ENCODE measurements at regions of chr2 and their contacts with region 1.

Region 1: DNA sequence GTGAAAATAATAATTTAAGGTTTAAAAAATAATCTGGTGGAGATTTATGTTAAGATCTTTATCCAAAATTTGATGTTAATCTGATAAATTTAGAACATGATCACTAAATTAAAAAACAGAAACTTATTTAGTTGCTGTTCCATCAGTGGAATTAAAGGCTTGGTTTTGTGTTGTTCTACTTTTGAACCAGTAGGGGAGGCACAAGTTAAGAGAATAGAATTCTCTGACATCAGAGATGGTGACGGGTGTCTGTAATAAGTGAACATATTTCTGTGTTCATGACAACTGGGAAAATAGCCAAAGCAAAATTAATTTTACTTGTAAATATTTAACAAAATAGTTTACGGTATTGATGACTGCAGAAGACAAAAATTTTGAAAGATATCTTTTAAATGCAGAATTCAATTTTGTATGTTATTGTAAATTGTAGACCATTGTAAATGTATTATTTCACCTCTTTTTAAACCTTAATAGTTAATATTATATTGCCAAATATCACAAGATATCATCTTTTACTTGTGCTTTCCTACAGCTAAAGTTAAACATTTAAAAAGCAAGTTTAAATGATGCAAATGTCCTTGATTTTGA is 106.0 kb downstream of the UBR3 start:
- DNase-seq: no peak
- ATAC-seq: peak in 1 of 2 donors; percentile 63

Region 2: DNA sequence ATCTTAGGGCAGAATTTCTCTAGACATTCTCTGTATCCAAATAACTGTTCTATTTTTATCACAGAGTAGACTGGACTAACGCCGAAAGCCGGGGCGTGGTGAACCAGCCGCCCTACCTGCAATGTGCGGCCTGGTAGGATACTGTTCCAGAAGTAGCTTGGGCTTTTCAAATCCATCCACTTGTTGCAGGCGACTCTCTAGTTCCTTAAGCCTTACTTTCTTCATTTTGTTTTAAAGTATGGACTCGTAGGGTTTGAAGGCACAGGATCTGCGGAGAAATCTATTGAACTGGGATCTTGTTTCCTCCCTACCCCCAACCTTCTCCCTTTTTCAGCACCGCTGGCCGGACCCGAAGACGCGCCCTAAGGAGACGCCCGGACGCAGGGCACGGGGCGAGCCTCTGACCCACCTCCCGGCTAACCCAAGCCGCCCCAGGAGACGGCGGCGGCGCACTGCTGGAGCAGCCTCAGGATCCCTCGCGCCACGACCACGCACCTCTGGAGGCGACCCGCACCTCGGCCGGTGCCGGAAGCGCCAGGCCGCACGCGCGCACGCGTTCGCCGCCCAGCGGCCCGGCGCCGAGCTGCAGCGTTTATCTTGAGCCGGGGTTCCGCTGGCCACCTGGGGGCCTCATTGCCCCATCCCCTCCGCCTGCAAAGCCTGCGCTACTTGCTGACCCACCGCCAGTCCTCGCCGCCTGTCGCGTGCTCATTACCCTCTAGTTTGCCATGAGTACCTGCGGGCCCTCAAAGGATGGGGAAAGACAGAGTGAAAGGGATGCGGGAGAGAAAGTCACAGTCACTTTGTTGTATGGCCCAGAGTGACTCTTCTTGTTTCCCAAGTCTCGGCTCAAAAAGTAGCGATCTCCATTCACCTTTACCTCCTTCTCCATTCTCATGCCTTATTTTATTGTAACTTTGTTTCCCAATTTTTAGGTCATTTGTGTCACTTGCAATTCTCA is 108.6 kb before region 1 on chr2 and contains the start of gene METTL5:
- intact Hi-C with region 1: loop called (anchors 2 to 5 kb)
- DNase-seq: peak; percentile 87
- ATAC-seq: peak; percentile 69 to 75
- total RNA-seq, gene METTL5: 51.5 to 55.2 TPM

Region 3: GRCh38 chr2:169895294-169895985 is 37.8 kb before region 1 on chr2:
- intact Hi-C with region 1: no loop called
- DNase-seq: no peak
- ATAC-seq: no peak

Region 4: DNA sequence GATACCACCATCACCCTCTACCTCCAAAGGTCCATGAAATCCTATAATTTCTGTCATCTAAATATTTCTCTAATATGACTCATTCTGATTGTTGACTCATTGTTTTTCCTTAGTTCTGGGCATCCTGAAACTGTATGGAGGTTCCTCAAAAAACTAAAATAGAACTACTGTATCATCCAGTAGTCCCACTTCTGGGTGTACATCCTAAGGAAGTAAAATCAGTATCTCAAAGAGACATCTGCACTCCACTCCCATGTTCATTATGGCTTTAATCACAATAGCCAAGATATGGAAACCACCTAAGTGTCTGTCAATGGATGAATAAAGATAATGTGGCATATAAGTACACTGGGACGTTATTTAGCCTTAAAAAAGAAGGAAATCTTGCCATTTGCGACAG is 118.9 kb after region 1 on chr2:
- intact Hi-C with region 1: loop called in 1 of 2 experiments (anchors 5 kb)
- DNase-seq: no peak
- ATAC-seq: peak in 1 of 2 donors; percentile 43

Measured in left cardiac atrium (tissue), 4 donors.